ENCODE measurements at regions of chr7 and their contacts with region 1.

Region 1: DNA sequence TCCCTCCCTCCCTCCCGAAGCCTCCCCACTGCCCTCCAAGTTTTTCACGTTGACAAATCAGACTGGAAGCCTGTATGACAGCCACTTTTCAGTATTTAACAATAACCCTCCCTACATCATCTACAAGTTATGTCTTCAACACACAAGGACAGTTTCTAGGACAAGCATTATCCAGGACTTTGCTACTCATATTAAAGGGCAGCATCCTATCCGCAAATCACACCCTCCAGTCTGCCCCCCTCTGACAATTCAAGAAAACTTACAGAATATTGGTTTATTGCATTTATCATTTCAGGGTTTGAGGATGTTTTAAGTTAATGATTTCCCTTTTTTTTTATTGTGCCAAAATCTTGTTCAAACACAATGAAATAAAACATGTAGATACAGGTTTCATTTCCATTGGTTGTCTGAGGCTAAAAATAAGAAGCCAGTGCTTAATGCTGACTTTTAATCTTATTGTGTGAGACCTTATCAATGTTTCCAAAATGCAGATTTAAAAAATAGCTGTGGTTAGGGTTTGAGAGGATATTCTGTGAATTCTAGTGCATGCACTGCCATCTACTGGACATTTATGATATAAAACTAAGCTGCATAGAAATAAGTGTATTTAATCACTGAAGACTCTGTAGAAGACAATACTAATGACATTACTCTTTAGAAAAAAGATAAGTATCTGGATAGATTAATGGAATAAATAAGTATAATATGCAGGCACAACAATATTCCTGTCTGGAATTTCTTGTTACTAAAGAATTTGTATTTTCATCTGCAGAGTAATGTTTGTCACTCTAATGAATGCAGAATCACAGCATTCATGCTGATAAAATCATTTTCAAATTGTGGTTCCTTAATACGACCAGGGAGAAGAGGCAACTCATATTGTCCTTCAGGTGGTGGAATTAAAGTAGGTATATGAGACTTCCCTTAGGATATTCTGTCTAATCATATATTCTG is 64.1 kb downstream of the CAV1 start:
- DNase-seq: no peak
- H3K4me3 Mint-ChIP-seq: no peak overlapping the region
- H3K27ac Mint-ChIP-seq: no peak overlapping the region
- H3K4me1 Mint-ChIP-seq: peaks cover 21% of the 10 kb centered on the region
- H3K27me3 Mint-ChIP-seq: peaks cover 21% of the 10 kb centered on the region

Region 2: GRCh38 chr7:116138202-116138801 is 450.6 kb before region 1 on chr7:
- CTCF ChIA-PET with region 1: interaction called, 7 read pairs
- POLR2A ChIA-PET with region 1: no interaction called
- intact Hi-C with region 1: loop called (anchors 1 kb)
- DNase-seq: no peak
- H3K4me3 Mint-ChIP-seq: no peak overlapping the region
- H3K27ac Mint-ChIP-seq: no peak overlapping the region
- H3K4me1 Mint-ChIP-seq: peaks cover 3% of the 10 kb centered on the region
- H3K27me3 Mint-ChIP-seq: peaks cover 2% of the 10 kb centered on the region

Region 3: DNA sequence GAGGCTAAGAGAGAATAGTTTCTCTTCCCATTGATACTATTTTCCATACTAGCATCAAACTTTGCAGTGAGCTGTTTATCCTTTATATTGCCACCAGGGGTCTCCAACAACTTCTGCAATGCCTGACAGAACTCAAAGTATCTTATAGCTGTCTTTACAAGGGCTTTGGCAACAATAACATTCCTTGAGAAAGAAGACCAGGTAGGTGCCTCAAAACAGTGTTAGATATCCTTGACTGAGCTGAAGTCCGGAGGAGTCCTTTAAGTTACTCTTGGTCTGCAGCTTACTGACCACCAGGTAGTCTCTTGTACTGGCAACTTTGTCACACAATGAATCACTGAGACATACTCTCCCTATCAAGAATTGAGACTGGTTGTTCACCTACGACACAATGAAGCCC is 408.6 kb before region 1 on chr7:
- CTCF ChIA-PET with region 1: interaction called, 25 read pairs
- POLR2A ChIA-PET with region 1: no interaction called
- intact Hi-C with region 1: loop called (anchors 1 kb)
- DNase-seq: peak; percentile 15
- H3K4me3 Mint-ChIP-seq: no peak overlapping the region
- H3K27ac Mint-ChIP-seq: no peak overlapping the region
- H3K4me1 Mint-ChIP-seq: no peaks in the 10 kb centered on the region
- H3K27me3 Mint-ChIP-seq: no peaks in the 10 kb centered on the region

Region 4: DNA sequence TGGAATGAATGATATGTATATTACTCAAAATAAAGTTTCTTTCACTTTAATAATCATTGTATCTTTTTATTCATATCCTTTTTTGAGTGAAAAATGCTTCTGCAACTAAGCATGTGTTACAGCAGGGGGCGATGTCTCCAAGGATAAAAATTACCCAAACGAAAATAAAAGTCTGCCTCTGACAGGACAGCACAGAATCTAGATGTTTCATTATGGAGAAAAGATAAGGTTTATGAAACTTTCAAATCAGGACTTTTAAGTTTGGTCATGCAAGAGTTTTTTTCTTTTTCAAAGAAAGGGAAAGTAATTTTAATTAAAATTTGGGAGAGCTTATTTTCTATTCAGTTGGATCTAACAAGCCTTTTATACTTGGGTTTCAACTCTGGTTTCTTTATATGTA is 330.2 kb before region 1 on chr7:
- CTCF ChIA-PET with region 1: interaction called, 81 read pairs
- POLR2A ChIA-PET with region 1: no interaction called
- intact Hi-C with region 1: loop called (anchors 1 kb)
- DNase-seq: no peak
- H3K4me3 Mint-ChIP-seq: no peak overlapping the region
- H3K27ac Mint-ChIP-seq: no peak overlapping the region
- H3K4me1 Mint-ChIP-seq: peaks cover 12% of the 10 kb centered on the region
- H3K27me3 Mint-ChIP-seq: no peaks in the 10 kb centered on the region

Region 5: DNA sequence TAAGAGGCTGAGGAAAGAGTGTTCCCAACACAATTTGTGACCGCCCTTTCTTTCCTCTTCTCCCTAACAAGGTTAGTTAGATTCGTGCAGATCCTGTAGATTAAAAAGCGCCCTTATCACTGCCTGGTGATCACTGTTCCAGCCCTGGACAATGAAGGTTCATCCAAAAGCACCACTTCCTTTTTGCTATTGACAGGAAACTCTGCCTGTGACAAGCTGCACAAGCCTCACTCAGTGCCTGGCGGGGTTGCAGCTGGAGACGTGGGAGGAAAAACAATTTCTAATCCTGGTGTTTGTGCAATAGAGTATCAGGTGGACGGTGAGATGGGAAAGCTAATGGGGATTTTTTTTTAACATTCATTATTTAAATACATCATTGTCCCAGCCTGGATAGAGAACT is 195.3 kb before region 1 on chr7:
- CTCF ChIA-PET with region 1: no interaction called
- POLR2A ChIA-PET with region 1: no interaction called
- intact Hi-C with region 1: no loop called
- DNase-seq: no peak
- H3K4me3 Mint-ChIP-seq: no peak overlapping the region
- H3K27ac Mint-ChIP-seq: no peak overlapping the region
- H3K4me1 Mint-ChIP-seq: no peaks in the 10 kb centered on the region
- H3K27me3 Mint-ChIP-seq: peaks cover 9% of the 10 kb centered on the region

Region 6: DNA sequence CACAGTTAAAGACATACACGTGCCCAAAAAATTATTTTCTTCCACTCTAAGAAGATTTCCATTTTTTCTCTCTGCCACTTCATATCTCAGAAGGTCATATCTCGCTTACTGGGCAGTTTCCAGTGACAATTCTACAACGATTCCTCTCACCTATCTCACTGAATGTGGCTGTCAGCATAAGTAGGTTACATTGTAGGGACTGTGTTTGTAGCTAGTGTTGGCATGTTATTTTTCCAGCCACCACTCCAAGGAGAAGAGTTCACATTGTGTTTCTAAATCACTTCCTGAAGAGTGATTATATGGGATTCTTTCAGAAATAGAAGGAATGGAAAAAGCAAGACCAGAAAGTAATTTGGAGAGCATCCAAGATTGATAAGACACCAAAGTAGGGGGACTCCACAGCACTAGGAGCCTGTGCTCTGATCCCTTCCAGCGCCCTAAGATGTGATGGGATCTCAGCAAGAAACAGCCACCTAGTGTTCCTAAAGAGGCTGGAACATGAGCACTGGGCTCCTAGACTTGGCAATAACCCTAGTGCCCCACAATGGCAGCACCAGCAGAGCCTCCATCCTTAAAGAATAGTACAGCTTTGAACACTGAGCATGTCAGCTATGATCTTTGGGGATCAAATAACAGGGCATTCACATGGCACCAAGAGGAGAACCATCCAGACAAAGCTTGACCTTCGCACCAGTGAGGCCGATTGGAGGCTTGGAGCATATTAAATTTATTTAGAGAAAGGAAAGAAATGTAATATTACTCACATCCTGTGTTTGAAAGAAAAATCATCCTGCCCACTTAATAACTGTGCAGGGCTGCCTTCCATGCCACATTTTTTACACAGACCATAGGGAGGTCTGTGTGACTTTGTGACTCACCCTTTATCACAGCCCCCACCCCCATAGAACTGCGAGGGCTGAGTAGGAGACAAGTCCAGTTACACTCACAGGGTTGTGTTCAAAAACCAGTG is 12.3 kb before region 1 on chr7:
- CTCF ChIA-PET with region 1: interaction called, 12 read pairs
- POLR2A ChIA-PET with region 1: interaction called, 5 read pairs
- intact Hi-C with region 1: no loop called
- DNase-seq: peak; percentile 35
- H3K4me3 Mint-ChIP-seq: no peak overlapping the region
- H3K27ac Mint-ChIP-seq: no peak overlapping the region
- H3K4me1 Mint-ChIP-seq: peaks cover 10% of the 10 kb centered on the region
- H3K27me3 Mint-ChIP-seq: peaks cover 6% of the 10 kb centered on the region

Region 7: GRCh38 chr7:116671681-116672595 is 83.0 kb after region 1 on chr7 and contains the start of gene MET:
- CTCF ChIA-PET with region 1: interaction called, 6 read pairs
- POLR2A ChIA-PET with region 1: no interaction called
- intact Hi-C with region 1: loop called (anchors 5 kb)
- DNase-seq: peak; percentile 73
- H3K4me3 Mint-ChIP-seq: peak within 1 kb of the TSS; percentile 66
- H3K27ac Mint-ChIP-seq: no peak within 1 kb of the TSS
- H3K4me1 Mint-ChIP-seq: peaks cover 8% of the 10 kb centered on the region
- H3K27me3 Mint-ChIP-seq: peaks cover 61% of the 10 kb centered on the region
- total RNA-seq, gene MET: 1.4 to 1.8 TPM

Region 8: GRCh38 chr7:116741625-116742316 is 152.9 kb after region 1 on chr7:
- CTCF ChIA-PET with region 1: no interaction called
- POLR2A ChIA-PET with region 1: no interaction called
- intact Hi-C with region 1: no loop called
- DNase-seq: no peak
- H3K4me3 Mint-ChIP-seq: no peak overlapping the region
- H3K27ac Mint-ChIP-seq: no peak overlapping the region
- H3K4me1 Mint-ChIP-seq: no peaks in the 10 kb centered on the region
- H3K27me3 Mint-ChIP-seq: peaks cover 23% of the 10 kb centered on the region

Region 9: GRCh38 chr7:116762971-116763370 is 174.1 kb after region 1 on chr7:
- CTCF ChIA-PET with region 1: no interaction called
- POLR2A ChIA-PET with region 1: no interaction called
- intact Hi-C with region 1: no loop called
- DNase-seq: no peak
- H3K4me3 Mint-ChIP-seq: no peak overlapping the region
- H3K27ac Mint-ChIP-seq: no peak overlapping the region
- H3K4me1 Mint-ChIP-seq: no peaks in the 10 kb centered on the region
- H3K27me3 Mint-ChIP-seq: peaks cover 5% of the 10 kb centered on the region

Region 10: GRCh38 chr7:116802746-116803152 is 213.8 kb after region 1 on chr7:
- CTCF ChIA-PET with region 1: interaction called, 76 read pairs
- POLR2A ChIA-PET with region 1: no interaction called
- intact Hi-C with region 1: no loop called
- DNase-seq: peak; percentile 56
- H3K4me3 Mint-ChIP-seq: no peak overlapping the region
- H3K27ac Mint-ChIP-seq: no peak overlapping the region
- H3K4me1 Mint-ChIP-seq: peaks cover 16% of the 10 kb centered on the region
- H3K27me3 Mint-ChIP-seq: peaks cover 19% of the 10 kb centered on the region